MCF 10A (cell line): ENCODE measurements at regions of chrX and their contacts with region 1.

Region 1: DNA sequence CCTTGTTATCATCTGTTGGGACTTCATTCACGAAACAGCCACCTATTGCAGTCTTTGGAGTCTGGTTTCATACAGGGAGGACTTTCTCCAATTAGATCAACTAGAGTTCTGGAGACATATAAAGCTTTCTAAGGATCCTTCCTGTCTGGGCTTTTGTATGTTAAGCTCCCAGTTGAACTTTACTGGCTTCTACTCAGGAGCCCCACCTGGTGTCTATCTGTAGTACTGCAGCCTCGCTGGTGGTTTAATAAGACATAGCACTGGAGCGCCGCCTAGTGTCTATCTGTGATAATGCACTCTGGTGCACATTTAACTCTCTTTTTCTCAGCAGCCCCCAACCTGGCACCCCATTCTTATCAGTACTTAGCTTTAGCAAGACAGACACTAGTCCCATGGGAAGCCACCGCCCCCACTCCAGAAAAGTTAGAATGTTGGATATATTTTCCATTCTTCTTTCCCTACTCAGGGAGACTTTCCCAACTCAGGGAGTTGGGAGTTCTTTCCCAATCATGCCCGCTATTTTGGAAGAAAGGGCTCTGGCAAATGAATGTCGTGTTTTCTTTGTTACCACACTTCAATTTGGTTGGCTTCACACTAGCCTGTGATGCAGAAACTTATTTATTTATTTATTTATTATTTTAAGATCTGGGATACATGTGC is 36.9 kb upstream of the SYTL4 start:
- DNase-seq: peak; percentile 86
- H3K4me3 Mint-ChIP-seq: no peak overlapping the region
- H3K27ac Mint-ChIP-seq: no peak overlapping the region
- H3K4me1 Mint-ChIP-seq: no peaks in the 10 kb centered on the region
- H3K27me3 Mint-ChIP-seq: peaks cover 65% of the 10 kb centered on the region
- CTCF ChIP-seq: peak; percentile 100

Region 2: DNA sequence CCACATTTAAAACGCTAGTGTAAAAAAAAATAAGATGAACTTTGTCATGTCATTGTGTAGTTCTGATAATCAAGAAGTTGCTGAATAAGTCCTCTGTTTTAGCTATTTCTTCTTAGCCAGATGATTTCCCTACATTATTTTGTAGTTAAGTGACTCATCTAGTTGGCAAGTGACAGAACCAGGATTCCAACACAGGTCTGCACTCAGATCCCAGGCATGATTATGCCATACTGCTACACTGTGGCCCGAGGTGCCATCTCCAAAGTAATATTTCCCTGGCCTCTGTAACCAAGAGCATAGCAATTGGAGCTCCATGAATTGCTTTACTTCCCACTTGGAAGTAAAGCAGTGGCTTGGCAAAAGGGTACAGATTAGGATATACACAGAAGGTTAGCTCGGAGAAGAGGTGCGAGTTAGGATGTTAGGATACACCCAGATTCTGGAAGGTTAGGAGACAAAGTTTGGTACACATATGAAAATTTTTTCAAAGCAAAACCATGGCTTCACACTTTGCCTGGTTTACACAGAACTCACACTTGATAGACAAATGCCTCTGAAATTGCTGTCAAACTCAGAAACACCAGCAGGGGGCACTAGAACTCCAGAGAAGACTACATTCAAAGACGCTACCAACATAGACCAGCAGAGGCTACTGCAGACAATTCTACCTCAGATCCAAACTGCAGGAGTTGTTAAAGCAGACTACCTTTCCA is 83.4 kb before region 1 on chrX:
- CTCF ChIA-PET with region 1: interaction called, 144 read pairs
- POLR2A ChIA-PET with region 1: interaction called, 3 read pairs
- intact Hi-C with region 1: loop called (anchors 1 kb)
- DNase-seq: peak; percentile 80
- H3K4me3 Mint-ChIP-seq: no peak overlapping the region
- H3K27ac Mint-ChIP-seq: no peak overlapping the region
- H3K4me1 Mint-ChIP-seq: no peaks in the 10 kb centered on the region
- H3K27me3 Mint-ChIP-seq: peaks cover 32% of the 10 kb centered on the region
- CTCF ChIP-seq: peak; percentile 88

Region 3: DNA sequence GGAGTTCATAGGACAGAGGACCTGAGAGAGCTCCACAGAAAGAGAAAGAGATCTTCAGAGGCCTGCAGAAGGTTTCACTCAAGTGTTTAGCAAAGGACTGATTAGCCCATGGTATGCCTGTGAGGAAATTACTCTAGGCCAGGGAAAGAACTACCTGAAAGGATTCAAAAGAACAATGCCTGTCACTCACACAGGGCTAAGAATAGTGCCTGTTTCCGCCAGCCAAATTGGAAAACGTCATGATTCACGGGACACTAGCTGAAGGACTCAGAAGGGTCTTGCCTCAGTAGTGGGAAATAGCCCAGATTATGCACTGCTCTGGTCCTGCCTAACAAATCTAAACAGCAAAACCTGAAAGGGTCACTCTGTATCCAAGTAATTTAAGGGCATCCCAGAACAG is 58.0 kb before region 1 on chrX:
- CTCF ChIA-PET with region 1: interaction called, 13 read pairs
- POLR2A ChIA-PET with region 1: no interaction called
- intact Hi-C with region 1: no loop called
- DNase-seq: no peak
- H3K4me3 Mint-ChIP-seq: no peak overlapping the region
- H3K27ac Mint-ChIP-seq: no peak overlapping the region
- H3K4me1 Mint-ChIP-seq: no peaks in the 10 kb centered on the region
- H3K27me3 Mint-ChIP-seq: peaks cover 39% of the 10 kb centered on the region
- CTCF ChIP-seq: no peak

Region 4: GRCh38 chrX:100750883-100751282 is 17.9 kb before region 1 on chrX:
- CTCF ChIA-PET with region 1: interaction called, 15 read pairs
- POLR2A ChIA-PET with region 1: no interaction called
- intact Hi-C with region 1: no loop called
- DNase-seq: no peak
- H3K4me3 Mint-ChIP-seq: no peak overlapping the region
- H3K27ac Mint-ChIP-seq: no peak overlapping the region
- H3K4me1 Mint-ChIP-seq: peaks cover 7% of the 10 kb centered on the region
- H3K27me3 Mint-ChIP-seq: peaks cover 88% of the 10 kb centered on the region
- CTCF ChIP-seq: no peak

Region 5: GRCh38 chrX:100964362-100964761 is 195.6 kb after region 1 on chrX:
- CTCF ChIA-PET with region 1: no interaction called
- POLR2A ChIA-PET with region 1: no interaction called
- intact Hi-C with region 1: no loop called
- DNase-seq: no peak
- H3K4me3 Mint-ChIP-seq: no peak overlapping the region
- H3K27ac Mint-ChIP-seq: no peak overlapping the region
- H3K4me1 Mint-ChIP-seq: no peaks in the 10 kb centered on the region
- H3K27me3 Mint-ChIP-seq: peaks cover 26% of the 10 kb centered on the region
- CTCF ChIP-seq: no peak